ENCODE measurements at regions of chrX and their contacts with region 1.

Region 1: GRCh38 chrX:106940068-106940467 is 19.9 kb downstream of the CLDN2 start:
- DNase-seq: no peak
- ATAC-seq: no peak

Region 2: GRCh38 chrX:106906361-106906760 is 33.7 kb before region 1 on chrX:
- intact Hi-C with region 1: loop called (anchors 5 kb)
- DNase-seq: no peak
- ATAC-seq: no peak

Measured in sciatic nerve (tissue), 2 donors.